Activated CD8-positive, alpha-beta T cell treated with anti-CD3 and anti-CD28 coated beads, Interleukin-2, amount 10 ng/mL, durations not matched to agents 7 days and 5 days (primary cell): ENCODE measurements at regions of chr7 and their contacts with region 1.

Region 1: GRCh38 chr7:55534175-55534915 is 38.0 kb downstream of the VOPP1 start:
- DNase-seq: peak; percentile 73
- ATAC-seq: peak; percentile 69
- H3K4me3 Mint-ChIP-seq: peak overlapping the region; percentile 48
- H3K27ac Mint-ChIP-seq: peak overlapping the region; percentile 86
- H3K4me1 Mint-ChIP-seq: peaks cover 76% of the 10 kb centered on the region
- H3K27me3 Mint-ChIP-seq: no peaks in the 10 kb centered on the region

Region 2: DNA sequence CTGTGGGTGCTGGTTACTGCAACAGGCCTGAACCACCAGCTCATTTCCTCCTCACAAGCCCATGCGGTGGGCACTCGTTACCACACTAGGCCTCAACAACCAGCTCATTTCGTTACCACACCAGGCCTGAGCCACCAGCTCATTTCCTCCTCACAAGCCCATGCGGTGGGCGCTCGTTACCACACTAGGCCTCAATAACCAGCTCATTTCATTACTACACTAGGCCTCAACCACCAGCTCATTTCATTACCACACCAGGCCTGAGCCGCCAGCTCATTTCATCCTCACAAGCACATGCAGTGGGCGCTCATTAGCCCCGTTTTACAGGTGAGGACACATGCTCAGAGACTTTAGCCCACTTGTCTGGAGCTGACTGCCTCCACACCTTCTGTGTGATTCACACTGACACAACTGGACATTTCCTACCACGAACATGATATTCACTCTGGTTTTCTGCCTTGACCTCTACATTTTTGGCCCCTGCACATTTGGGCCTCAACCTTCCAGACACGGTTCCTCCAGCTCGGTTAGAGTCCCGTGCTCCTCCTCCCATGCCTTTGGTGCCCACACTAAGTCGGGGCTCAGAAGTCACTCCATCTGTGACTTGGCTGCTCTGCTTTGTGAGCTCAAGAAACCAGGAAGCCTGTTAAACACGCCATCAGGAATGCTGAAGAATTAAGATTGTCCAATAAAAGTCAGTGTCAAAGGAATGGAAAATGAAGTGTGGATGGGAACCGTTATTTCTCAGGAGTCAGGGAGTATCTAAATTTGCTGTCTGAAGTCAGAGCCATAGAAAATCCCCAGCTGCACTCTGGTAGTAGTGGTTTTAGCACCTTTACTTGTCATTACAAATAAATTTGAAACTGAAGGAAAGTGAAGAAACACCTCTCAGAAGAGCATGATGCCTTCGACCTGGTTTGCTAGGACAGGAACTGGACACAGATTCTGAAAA is 225.0 kb before region 1 on chr7:
- CTCF ChIA-PET with region 1: interaction called, 9 read pairs
- POLR2A ChIA-PET with region 1: interaction called, 11 read pairs
- DNase-seq: peak; percentile 85
- ATAC-seq: peak; percentile 89
- H3K4me3 Mint-ChIP-seq: peak overlapping the region; percentile 26
- H3K27ac Mint-ChIP-seq: peak overlapping the region; percentile 45
- H3K4me1 Mint-ChIP-seq: peaks cover 42% of the 10 kb centered on the region
- H3K27me3 Mint-ChIP-seq: peaks cover 29% of the 10 kb centered on the region

Region 3: GRCh38 chr7:55449205-55449991 is 84.9 kb before region 1 on chr7:
- CTCF ChIA-PET with region 1: no interaction called
- POLR2A ChIA-PET with region 1: no interaction called
- DNase-seq: no peak
- ATAC-seq: no peak
- H3K4me3 Mint-ChIP-seq: no peak overlapping the region
- H3K27ac Mint-ChIP-seq: no peak overlapping the region
- H3K4me1 Mint-ChIP-seq: peaks cover 5% of the 10 kb centered on the region
- H3K27me3 Mint-ChIP-seq: no peaks in the 10 kb centered on the region

Region 4: DNA sequence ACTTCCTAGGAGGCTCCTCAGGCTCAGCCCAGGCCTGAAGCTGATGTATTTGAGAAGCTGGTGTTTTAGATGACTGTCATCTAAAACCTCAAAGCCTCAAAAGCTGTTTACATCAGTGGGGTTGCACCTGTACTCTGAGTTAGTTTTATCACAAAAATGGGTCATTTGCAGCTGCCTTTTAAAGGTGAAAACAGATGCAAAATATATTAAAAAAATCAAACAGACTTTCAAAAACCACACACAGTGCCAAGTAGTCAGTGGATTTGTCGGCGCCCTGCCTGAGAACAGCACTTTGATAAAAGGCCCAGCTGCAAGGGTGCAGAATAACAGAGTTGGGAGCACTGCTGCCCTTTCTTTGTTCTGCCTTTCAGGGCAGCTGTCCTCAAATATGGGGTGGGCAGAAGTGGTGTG is 65.1 kb before region 1 on chr7:
- CTCF ChIA-PET with region 1: interaction called, 14 read pairs
- POLR2A ChIA-PET with region 1: interaction called, 10 read pairs
- DNase-seq: peak; percentile 36
- ATAC-seq: peak; percentile 66
- H3K4me3 Mint-ChIP-seq: no peak overlapping the region
- H3K27ac Mint-ChIP-seq: peak overlapping the region; percentile 52
- H3K4me1 Mint-ChIP-seq: peaks cover 34% of the 10 kb centered on the region
- H3K27me3 Mint-ChIP-seq: no peaks in the 10 kb centered on the region

Region 5: DNA sequence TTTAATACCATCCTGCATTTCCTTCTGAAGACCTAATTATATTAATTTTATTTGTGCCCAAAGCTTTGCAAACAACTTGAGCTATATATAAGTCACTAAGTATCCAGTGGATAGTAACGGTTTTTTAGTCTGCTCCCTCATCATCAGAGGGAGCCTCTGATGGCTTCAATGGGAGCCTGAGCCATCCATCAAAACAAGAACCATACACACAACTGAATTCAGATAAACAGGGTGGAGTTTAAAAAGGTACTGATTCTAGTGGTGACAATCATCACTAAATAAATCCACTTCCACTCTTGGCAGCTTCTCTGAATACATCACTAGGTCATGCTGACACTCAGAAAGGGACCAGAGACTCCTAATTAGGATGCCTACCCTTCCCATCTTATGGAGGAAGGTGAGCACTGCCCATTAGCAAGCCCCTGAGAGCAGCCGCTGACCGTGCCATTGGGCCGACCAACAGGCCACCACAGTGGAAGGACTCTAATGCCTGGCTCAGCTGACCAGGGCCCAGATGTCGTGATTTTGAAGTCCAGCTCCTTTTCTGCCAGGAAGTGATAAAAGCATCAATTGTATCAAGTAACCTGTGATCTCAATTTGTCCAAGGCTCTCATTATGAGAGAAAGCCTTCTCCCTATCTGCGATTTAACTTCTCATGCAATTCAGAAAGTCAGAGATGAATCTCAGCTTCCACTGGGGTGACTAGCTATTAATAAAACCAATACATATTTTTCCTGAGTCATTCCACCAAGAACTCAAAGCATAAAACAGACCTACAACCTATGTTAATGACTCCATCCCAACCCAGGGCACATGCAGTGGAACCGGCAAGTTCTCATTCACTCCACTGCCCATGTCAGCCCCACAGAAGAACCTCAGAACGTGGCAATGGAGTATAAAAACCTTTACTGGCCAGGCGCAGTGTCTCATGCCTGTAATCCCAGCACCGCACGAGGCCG is 24.9 kb after region 1 on chr7:
- CTCF ChIA-PET with region 1: interaction called, 3 read pairs
- POLR2A ChIA-PET with region 1: interaction called, 10 read pairs
- DNase-seq: no peak
- ATAC-seq: no peak
- H3K4me3 Mint-ChIP-seq: no peak overlapping the region
- H3K27ac Mint-ChIP-seq: no peak overlapping the region
- H3K4me1 Mint-ChIP-seq: peaks cover 48% of the 10 kb centered on the region
- H3K27me3 Mint-ChIP-seq: no peaks in the 10 kb centered on the region

Region 6: DNA sequence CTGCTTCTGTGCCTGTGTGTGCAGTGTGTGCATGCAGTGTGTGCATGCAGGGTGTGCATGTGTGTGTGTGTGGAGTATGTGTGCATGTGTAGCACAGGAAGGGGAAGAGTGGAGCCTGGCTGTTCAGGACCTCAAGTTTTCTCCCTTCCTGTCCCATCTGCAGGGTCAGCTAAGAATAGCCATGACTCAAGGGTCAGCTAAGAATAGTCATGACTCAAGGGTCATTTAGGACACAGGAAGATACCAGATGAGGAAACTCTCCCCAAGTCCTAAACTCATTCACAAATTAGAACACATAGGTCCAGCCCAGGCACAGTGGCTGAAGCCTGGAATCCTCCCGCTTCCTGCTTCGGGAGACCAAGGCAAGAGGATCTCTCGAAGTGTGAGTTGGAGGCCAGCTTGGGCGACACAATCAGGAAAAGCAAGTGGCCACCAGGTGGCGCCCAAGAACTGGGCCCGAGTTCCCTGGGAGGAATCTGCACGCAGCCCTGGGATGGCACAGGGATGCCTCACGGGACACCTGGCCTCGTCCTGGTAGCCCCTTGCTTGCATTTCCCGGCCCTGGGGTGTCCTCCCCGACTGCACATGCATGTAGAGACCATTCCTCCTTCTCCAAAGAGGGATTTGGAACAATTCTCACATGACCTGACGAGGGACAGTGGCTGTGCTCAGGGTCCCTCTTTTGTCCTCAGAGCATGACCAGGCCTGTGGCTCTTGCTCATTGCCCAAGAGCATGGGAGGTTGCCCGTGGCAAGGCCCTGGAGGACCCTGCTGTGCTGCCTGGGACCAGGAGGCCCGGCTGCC is 59.4 kb after region 1 on chr7:
- CTCF ChIA-PET with region 1: interaction called, 15 read pairs
- POLR2A ChIA-PET with region 1: no interaction called
- DNase-seq: peak; percentile 72
- ATAC-seq: peak; percentile 65
- H3K4me3 Mint-ChIP-seq: no peak overlapping the region
- H3K27ac Mint-ChIP-seq: no peak overlapping the region
- H3K4me1 Mint-ChIP-seq: no peaks in the 10 kb centered on the region
- H3K27me3 Mint-ChIP-seq: no peaks in the 10 kb centered on the region

Region 7: GRCh38 chr7:55651057-55651456 is 116.7 kb after region 1 on chr7:
- CTCF ChIA-PET with region 1: no interaction called
- POLR2A ChIA-PET with region 1: no interaction called
- DNase-seq: no peak
- ATAC-seq: no peak
- H3K4me3 Mint-ChIP-seq: no peak overlapping the region
- H3K27ac Mint-ChIP-seq: no peak overlapping the region
- H3K4me1 Mint-ChIP-seq: no peaks in the 10 kb centered on the region
- H3K27me3 Mint-ChIP-seq: peaks cover 31% of the 10 kb centered on the region